Prostate gland (tissue), 2 donors: ENCODE measurements at regions of chr7 and their contacts with region 1.

Region 1: GRCh38 chr7:150378853-150379440 is at the start of gene ZNF775:
- DNase-seq: peak; percentile 98
- H3K4me3 ChIP-seq: peak within 1 kb of the TSS; percentile 89 to 95
- H3K27ac ChIP-seq: peak within 1 kb of the TSS; percentile 93 to 94
- H3K4me1 ChIP-seq: peaks cover 17% of the 10 kb centered on the region
- H3K27me3 ChIP-seq: no peaks in the 10 kb centered on the region
- CTCF ChIP-seq: peak in 2 of 4 experiments; percentile 23
- POLR2A ChIP-seq: peak; percentile 76
- total RNA-seq, gene ZNF775: 14.4 to 14.8 TPM

Region 2: DNA sequence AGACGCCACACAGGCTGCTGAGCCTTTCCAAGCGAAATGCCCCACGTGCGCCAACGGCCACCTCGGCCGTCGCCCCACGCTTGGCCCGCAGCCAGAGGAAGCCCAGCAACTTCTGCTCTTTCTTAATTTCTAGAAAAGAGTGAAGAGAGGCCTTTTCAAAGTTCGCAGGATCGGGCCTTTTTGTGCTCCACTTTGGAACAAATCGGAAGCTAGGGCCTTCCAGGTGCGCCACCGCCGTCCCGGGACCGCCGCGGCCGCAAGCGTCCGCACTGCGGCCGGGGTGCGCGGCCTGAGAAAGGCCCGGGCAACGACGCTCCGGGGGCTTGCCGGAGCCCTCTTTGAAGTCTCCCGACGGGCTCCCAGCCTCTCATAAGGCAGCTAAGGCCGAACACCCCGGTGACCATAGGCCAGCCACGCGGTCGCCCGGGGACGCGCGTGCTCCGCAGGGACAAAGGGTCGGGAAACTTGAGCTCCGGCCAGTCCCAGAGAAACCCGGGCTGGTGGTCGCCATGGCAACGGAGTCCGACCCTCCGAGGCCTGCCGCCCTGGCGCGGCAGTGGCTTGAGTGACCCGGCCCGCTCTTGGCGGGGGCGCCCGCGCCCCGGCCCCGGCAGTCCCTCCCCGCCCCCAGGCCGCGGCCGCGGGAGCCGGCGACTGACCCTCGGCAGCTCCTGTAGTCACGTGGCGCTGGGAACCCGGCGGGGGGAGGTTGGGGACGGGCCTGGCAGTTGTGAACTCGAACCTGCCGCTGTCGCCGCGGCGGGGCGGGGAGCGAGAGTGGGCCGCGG is 10.7 kb before region 1 on chr7 and contains the start of gene REPIN1:
- intact Hi-C with region 1: loop called (anchors 1 kb)
- DNase-seq: peak; percentile 89
- H3K4me3 ChIP-seq: peak within 1 kb of the TSS; percentile 86 to 88
- H3K27ac ChIP-seq: peak within 1 kb of the TSS; percentile 95 to 97
- H3K4me1 ChIP-seq: peaks cover 22% of the 10 kb centered on the region
- H3K27me3 ChIP-seq: no peaks in the 10 kb centered on the region
- CTCF ChIP-seq: no peak
- POLR2A ChIP-seq: peak; percentile 58
- total RNA-seq, gene REPIN1: 150 to 171 TPM

Region 3: DNA sequence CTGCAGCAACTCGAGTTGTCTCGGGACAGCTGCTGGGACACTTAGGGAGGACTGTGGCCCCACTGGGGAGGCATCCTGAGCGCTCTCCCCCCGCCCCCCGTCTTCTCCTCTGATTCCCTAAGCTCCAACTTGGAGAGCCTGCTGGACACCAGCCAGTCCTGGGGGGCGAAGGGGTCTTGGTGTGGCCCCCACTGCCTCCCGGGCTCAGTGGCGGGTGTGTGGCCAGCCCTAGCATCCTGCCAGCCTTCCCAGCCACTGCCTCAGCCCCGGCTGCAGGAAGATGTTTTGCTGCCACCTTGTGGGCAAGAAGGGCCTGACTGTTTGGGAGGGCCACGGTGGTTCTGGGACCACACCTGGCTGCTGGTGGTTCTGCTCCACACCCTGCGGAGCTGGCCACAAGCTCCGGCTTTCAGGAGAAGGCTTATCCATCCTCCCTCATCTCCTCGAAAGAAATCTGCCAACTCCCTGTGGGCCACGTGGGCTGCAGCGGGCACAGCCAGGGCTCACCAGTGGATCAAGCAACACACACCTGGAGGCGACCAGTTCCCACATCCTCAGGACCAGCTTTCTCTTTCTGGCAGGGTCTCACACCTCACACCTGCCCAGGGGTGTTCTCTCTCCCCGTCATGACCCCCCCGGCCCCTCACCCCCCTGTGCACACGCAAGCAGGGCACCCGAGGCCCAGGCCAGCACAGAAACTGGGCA is 732.1 kb after region 1 on chr7:
- intact Hi-C with region 1: no loop called
- DNase-seq: peak; percentile 77
- H3K4me3 ChIP-seq: no peak overlapping the region
- H3K27ac ChIP-seq: no peak overlapping the region
- H3K4me1 ChIP-seq: peaks cover 4% of the 10 kb centered on the region
- H3K27me3 ChIP-seq: no peaks in the 10 kb centered on the region
- CTCF ChIP-seq: peak; percentile 68 to 93 (median 85)
- POLR2A ChIP-seq: no peak